PC-3 (cell line): ENCODE measurements at regions of chr1 and their contacts with region 1.

Region 1: GRCh38 chr1:221089266-221089665 is 210.0 kb downstream of the HLX start:
- DNase-seq: peak; percentile 89
- ATAC-seq: peak; percentile 86
- H3K4me3 ChIP-seq: peak overlapping the region; percentile 17; the same call in 1 of the 2 replicates
- H3K27ac ChIP-seq: peak overlapping the region; percentile 30
- H3K4me1 ChIP-seq: peaks cover 54% of the 10 kb centered on the region
- H3K27me3 ChIP-seq: no peaks in the 10 kb centered on the region
- CTCF ChIP-seq: no peak

Region 2: GRCh38 chr1:220894025-220894923 is 195.0 kb before region 1 on chr1:
- CTCF ChIA-PET with region 1: no interaction called
- POLR2A ChIA-PET with region 1: no interaction called
- intact Hi-C with region 1: no loop called
- DNase-seq: no peak
- ATAC-seq: no peak
- H3K4me3 ChIP-seq: no peak overlapping the region
- H3K27ac ChIP-seq: no peak overlapping the region
- H3K4me1 ChIP-seq: no peaks in the 10 kb centered on the region
- H3K27me3 ChIP-seq: no peaks in the 10 kb centered on the region
- CTCF ChIP-seq: no peak

Region 3: GRCh38 chr1:220982686-220983085 is 106.6 kb before region 1 on chr1:
- CTCF ChIA-PET with region 1: no interaction called
- POLR2A ChIA-PET with region 1: no interaction called
- intact Hi-C with region 1: no loop called
- DNase-seq: no peak
- ATAC-seq: no peak
- H3K4me3 ChIP-seq: no peak overlapping the region
- H3K27ac ChIP-seq: no peak overlapping the region
- H3K4me1 ChIP-seq: no peaks in the 10 kb centered on the region
- H3K27me3 ChIP-seq: no peaks in the 10 kb centered on the region
- CTCF ChIP-seq: no peak

Region 4: DNA sequence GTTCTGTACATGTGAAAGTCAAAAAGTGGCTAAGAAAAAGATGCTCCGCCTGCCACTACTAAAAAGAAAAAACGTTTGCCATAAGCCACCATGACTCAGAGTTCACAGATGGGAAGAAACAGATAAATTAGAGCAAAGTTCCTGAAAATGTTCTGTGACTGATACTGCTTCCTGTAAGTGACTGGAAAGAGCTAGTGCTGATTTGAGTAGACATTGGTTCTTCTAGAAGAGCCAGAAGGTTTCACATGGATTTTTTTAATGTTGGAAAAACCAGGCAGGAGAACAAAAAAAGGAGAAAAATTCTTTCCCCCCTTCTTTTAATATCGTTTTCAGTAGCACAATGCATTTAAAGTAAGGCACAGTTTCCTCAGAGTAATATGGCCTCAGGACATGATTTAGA is 11.3 kb after region 1 on chr1:
- CTCF ChIA-PET with region 1: no interaction called
- POLR2A ChIA-PET with region 1: no interaction called
- intact Hi-C with region 1: loop called (anchors 1 kb)
- DNase-seq: peak; percentile 89
- ATAC-seq: peak; percentile 62
- H3K4me3 ChIP-seq: no peak overlapping the region
- H3K27ac ChIP-seq: peak overlapping the region; percentile 62
- H3K4me1 ChIP-seq: peaks cover 58% of the 10 kb centered on the region
- H3K27me3 ChIP-seq: no peaks in the 10 kb centered on the region
- CTCF ChIP-seq: no peak